ENCODE measurements at regions of chr5 and their contacts with region 1.

Region 1: GRCh38 chr5:146965761-146966659 is 87.5 kb upstream of the PPP2R2B start:
- DNase-seq: peak in 2 of 4 donors; percentile 52 to 74
- ATAC-seq: peak; percentile 98
- H3K4me3 ChIP-seq: no peak overlapping the region
- H3K27ac ChIP-seq: no peak overlapping the region
- H3K4me1 ChIP-seq: no peaks in the 10 kb centered on the region
- H3K27me3 ChIP-seq: no peaks in the 10 kb centered on the region
- CTCF ChIP-seq: peak; percentile 72 to 88

Region 2: DNA sequence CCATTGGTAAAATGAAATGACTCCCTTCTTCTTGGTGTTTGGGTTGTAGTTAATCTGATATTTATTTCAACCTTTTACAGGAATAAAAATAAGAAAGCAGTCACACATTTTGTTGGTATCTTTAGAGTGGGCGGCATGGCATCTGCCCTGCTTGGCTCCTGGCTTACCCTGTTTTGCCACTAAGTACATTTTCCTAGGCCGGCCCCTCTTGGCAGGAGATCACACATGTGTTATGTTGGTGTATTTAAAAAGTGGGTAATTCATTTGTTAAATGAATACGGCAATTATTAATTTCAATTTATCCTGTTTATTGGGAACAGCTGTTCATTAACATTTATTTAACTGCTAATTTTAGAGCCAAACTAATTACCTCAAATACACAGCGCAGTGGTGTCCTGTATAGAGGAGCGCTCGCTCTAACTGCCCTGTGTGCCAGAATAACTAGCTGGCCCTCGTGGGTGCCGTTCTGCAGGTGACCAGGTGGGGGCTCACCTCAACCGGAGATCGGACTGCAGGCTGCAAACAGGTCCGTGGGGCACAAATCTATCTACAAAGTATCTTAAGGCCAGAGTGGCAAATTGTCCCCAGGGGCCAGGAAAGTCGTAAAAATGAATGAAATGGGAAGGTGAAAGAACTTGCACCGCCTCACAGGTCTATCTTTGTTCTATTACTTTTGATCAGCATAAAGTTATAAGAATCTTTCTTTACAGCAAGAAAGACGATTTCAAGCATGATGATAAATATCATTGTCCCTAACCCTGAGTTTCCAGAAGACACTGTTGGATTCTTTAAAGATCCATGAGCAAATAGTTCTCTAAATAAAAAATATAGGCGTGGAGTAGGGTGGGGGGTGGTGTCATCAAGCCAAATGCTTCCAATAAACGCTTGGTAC is 423.8 kb before region 1 on chr5:
- intact Hi-C with region 1: loop called in 1 of 2 experiments (anchors 10 kb)
- DNase-seq: peak; percentile 22 to 81 (median 51)
- ATAC-seq: peak; percentile 98
- H3K4me3 ChIP-seq: no peak overlapping the region
- H3K27ac ChIP-seq: no peak overlapping the region
- H3K4me1 ChIP-seq: no peaks in the 10 kb centered on the region
- H3K27me3 ChIP-seq: no peaks in the 10 kb centered on the region
- CTCF ChIP-seq: peak; percentile 64 to 67